ENCODE measurements at regions of chr12 and their contacts with region 1.

Region 1: DNA sequence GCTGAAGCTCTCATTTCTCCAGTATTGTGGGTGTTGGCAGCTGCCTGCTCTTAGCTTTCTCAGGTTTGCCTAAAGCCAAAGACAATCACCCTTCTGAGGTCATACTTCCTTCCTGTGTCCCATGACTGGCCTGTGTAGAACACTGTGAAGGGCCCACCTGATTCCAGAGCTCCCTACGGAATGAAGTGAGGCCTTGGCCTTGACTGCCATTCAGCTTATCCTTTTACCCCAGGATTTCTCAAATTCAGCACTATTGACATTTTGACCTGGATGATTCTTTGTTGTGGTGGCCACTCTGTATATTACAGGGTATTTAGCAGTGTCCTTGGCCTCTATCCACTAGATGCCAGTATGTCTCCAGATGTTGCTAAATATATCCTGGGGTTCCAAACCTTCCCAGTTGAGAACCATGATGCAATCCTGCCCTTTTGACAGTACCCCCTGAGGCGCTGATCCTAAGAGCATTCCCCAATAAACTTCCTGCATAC is 112.3 kb upstream of the KRR1 start:
- DNase-seq: peak; percentile 15
- H3K4me3 ChIP-seq: no peak overlapping the region
- H3K27ac ChIP-seq: no peak overlapping the region
- H3K4me1 ChIP-seq: peaks cover 0 to 5% of the 10 kb centered on the region in 2 experiments; a peak in 1 of 4 replicates
- H3K27me3 ChIP-seq: no peaks in the 10 kb centered on the region
- CTCF ChIP-seq: peak; percentile 53
- EP300 ChIP-seq: no peak
- RAD21 ChIP-seq: peak; percentile 77

Region 2: GRCh38 chr12:75585330-75585729 is 38.3 kb before region 1 on chr12:
- CTCF ChIA-PET with region 1: no interaction called
- POLR2A ChIA-PET with region 1: no interaction called
- DNase-seq: no peak
- H3K4me3 ChIP-seq: no peak overlapping the region; a peak in 1 of 4 replicates
- H3K27ac ChIP-seq: peak overlapping the region; percentile 43 to 85; a peak in 3 of 4 replicates
- H3K4me1 ChIP-seq: peaks cover 5 to 20% of the 10 kb centered on the region in 2 experiments
- H3K27me3 ChIP-seq: no peaks in the 10 kb centered on the region
- CTCF ChIP-seq: no peak
- EP300 ChIP-seq: peak in 1 of 2 experiments; percentile 82; a peak in 2 of 4 replicates
- RAD21 ChIP-seq: no peak

Region 3: GRCh38 chr12:75599061-75599460 is 24.6 kb before region 1 on chr12:
- CTCF ChIA-PET with region 1: interaction called, 13 read pairs
- POLR2A ChIA-PET with region 1: no interaction called
- DNase-seq: no peak
- H3K4me3 ChIP-seq: no peak overlapping the region
- H3K27ac ChIP-seq: no peak overlapping the region
- H3K4me1 ChIP-seq: no peaks in the 10 kb centered on the region
- H3K27me3 ChIP-seq: no peaks in the 10 kb centered on the region
- CTCF ChIP-seq: no peak
- EP300 ChIP-seq: no peak
- RAD21 ChIP-seq: no peak

Region 4: GRCh38 chr12:75606151-75606550 is 17.5 kb before region 1 on chr12:
- CTCF ChIA-PET with region 1: interaction called, 14 read pairs
- POLR2A ChIA-PET with region 1: no interaction called
- DNase-seq: no peak
- H3K4me3 ChIP-seq: no peak overlapping the region
- H3K27ac ChIP-seq: no peak overlapping the region
- H3K4me1 ChIP-seq: no peaks in the 10 kb centered on the region; a peak in 2 of 4 replicates
- H3K27me3 ChIP-seq: no peaks in the 10 kb centered on the region
- CTCF ChIP-seq: no peak
- EP300 ChIP-seq: no peak
- RAD21 ChIP-seq: no peak

Region 5: GRCh38 chr12:75735853-75736252 is 112.2 kb after region 1 on chr12:
- CTCF ChIA-PET with region 1: no interaction called
- POLR2A ChIA-PET with region 1: no interaction called
- DNase-seq: no peak
- H3K4me3 ChIP-seq: no peak overlapping the region
- H3K27ac ChIP-seq: no peak overlapping the region
- H3K4me1 ChIP-seq: no peaks in the 10 kb centered on the region
- H3K27me3 ChIP-seq: no peaks in the 10 kb centered on the region
- CTCF ChIP-seq: no peak
- EP300 ChIP-seq: no peak
- RAD21 ChIP-seq: no peak

Region 6: DNA sequence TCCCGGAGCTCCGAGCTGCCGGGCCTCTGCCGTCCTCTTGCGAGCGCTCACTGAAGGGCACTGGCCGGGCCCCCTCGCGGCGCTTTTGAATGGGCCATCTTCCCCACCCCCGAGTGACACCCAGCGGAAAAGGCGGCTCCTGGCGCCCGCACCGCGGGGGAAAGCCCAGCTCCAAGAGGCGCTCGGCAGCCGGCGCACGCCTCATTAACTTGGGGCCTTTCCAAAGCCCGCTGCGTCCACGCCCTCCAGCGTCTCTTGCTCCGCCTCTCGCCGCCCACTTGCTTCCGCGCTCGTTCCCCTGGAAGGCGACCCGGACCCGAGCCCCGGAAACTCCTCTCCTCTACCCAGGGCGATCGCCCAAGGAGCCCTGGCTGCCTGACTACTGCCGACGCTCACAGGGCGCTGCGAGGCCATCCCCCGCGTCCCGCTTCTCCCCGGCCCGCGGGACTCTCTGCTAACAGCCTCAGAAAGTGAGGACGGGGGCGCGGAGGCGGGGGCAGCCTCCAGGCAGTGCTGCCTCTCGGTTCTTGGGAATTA is 407.9 kb after region 1 on chr12 and contains the start of gene PHLDA1:
- CTCF ChIA-PET with region 1: interaction called, 13 read pairs
- POLR2A ChIA-PET with region 1: no interaction called
- DNase-seq: peak; percentile 88
- H3K4me3 ChIP-seq: peak within 1 kb of the TSS; percentile 80 to 91
- H3K27ac ChIP-seq: peak within 1 kb of the TSS; percentile 69 to 92
- H3K4me1 ChIP-seq: peaks cover 12 to 15% of the 10 kb centered on the region in 2 experiments
- H3K27me3 ChIP-seq: no peaks in the 10 kb centered on the region
- CTCF ChIP-seq: peak; percentile 59
- EP300 ChIP-seq: peak in 1 of 2 experiments; percentile 51; a peak in 1 of 4 replicates
- RAD21 ChIP-seq: peak; percentile 61
- polyA plus RNA-seq, gene PHLDA1: 21.6 and 26.2 TPM in 2 replicates

Region 7: DNA sequence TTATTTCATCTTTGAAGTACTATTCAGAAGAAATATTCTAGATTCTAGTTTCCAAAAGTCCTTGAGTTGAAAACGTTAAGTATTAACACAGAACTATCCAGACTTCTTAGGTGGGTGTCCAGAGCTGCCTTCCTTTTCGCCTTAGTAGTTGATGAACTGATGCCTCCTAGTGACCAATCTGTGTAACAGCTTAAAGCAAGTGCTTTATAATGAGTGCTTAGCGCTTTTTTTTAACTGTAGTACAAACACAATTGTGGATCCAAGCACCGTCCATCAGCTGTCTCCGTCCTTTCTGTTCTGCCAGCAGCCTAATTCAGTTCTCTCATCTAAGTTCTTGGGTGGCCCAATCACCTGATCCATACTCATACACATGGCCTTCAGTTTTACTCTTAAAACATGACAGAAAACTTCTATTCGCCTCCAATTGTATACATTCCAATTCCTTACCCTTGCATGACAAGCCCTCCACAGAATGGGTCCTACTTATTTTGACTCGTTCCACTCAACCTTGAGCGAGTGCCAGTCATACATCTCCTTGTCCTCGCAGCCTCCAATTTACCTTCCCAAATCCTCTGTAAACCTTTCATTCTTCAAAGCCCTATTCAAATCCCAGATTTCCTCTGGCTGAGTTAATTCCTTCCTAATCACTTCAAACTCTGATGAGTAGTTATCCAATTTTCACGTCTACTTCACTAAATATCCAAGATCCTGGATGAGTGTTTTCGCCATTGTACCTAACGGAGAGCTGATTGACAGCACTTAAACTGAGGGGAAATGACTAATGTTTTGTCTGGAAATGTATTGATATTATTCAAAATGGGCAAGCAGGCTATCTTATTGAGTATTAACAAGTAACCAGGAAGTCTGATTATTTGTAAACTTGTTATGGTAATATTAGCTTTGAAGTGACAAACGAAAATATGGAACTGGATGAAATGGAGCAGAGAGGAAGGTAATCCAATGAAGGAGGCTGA is 413.7 kb after region 1 on chr12:
- CTCF ChIA-PET with region 1: interaction called, 13 read pairs
- POLR2A ChIA-PET with region 1: no interaction called
- DNase-seq: peak; percentile 59
- H3K4me3 ChIP-seq: no peak overlapping the region
- H3K27ac ChIP-seq: peak overlapping the region in 1 of 2 experiments; percentile 14; a peak in 2 of 4 replicates
- H3K4me1 ChIP-seq: peaks cover 0 to 22% of the 10 kb centered on the region in 2 experiments; a peak in 3 of 4 replicates
- H3K27me3 ChIP-seq: no peaks in the 10 kb centered on the region
- CTCF ChIP-seq: peak; percentile 92
- EP300 ChIP-seq: no peak
- RAD21 ChIP-seq: peak; percentile 95